ENCODE measurements at regions of chr16 and their contacts with region 1.

Region 1: GRCh38 chr16:1772736-1773584 is at the starts of genes EME2 and MRPS34:
- DNase-seq: peak; percentile 47 to 89 (median 78)
- H3K4me3 ChIP-seq: peak within 1 kb of the TSS; percentile 77 to 100 (median 95)
- H3K27ac ChIP-seq: peak within 1 kb of the TSS; percentile 81 to 99 (median 95)
- H3K27me3 ChIP-seq: no peaks in the 10 kb centered on the region
- CTCF ChIP-seq: peak; percentile 37 to 83 (median 68)
- total RNA-seq, gene EME2: 12.6 to 44.4 (median 21.7) TPM
- total RNA-seq, gene MRPS34: 37.4 to 77.9 (median 58.6) TPM

Region 2: DNA sequence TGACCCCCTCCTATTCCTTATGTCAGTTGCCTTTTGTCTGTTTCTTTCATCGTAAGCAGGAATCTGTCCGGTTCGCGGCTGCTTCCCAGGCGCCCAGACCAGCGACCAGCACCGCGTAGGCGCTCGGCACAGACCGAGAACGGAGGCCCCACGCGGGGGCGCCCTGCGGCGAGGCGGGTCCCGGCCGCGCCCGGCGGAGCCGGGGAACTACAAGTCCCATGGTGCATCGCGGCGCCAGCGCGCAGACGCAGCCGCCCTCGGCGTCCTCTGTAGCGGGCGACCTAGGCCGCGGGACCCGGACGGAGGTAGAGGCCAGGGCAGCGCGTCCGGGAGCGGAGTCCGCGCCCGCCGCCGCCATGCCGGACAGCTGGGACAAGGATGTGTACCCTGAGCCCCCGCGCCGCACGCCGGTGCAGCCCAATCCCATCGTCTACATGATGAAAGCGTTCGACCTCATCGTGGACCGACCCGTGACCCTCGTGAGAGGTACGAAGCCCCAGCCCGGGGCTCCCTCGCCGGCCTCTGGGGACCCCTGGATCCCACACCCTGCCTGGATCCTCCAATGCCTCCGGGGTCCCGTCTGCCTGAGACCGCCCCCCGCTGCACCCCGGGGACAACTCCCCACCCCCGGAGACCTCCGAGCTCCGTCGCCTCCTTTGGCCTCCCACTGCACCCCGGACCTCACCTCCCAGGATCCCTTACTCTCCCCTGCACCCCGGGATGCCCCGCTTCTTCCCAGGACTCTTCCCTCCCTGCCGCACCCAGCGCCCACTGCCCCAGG is 186.5 kb after region 1 on chr16 and contains the start of gene NDUFB10:
- intact Hi-C with region 1: loop called in 1 of 2 experiments (anchors 10 kb)
- DNase-seq: peak; percentile 79 to 97 (median 89)
- H3K4me3 ChIP-seq: peak within 1 kb of the TSS; percentile 63 to 100 (median 95)
- H3K27ac ChIP-seq: peak within 1 kb of the TSS; percentile 57 to 97 (median 90)
- H3K27me3 ChIP-seq: no peaks in the 10 kb centered on the region
- CTCF ChIP-seq: peak; percentile 52 to 97 (median 88)
- total RNA-seq, gene NDUFB10: 74.8 to 178 (median 131) TPM